PC-3 (cell line): ENCODE measurements at regions of chr6 and their contacts with region 1.

Region 1: GRCh38 chr6:42043787-42044475 is 6.4 kb upstream of the TAF8 start:
- DNase-seq: peak; percentile 92
- ATAC-seq: peak; percentile 65
- H3K4me3 ChIP-seq: no peak overlapping the region
- H3K27ac ChIP-seq: no peak overlapping the region
- H3K4me1 ChIP-seq: peaks cover 27% of the 10 kb centered on the region
- H3K27me3 ChIP-seq: no peaks in the 10 kb centered on the region
- CTCF ChIP-seq: peak; percentile 97

Region 2: DNA sequence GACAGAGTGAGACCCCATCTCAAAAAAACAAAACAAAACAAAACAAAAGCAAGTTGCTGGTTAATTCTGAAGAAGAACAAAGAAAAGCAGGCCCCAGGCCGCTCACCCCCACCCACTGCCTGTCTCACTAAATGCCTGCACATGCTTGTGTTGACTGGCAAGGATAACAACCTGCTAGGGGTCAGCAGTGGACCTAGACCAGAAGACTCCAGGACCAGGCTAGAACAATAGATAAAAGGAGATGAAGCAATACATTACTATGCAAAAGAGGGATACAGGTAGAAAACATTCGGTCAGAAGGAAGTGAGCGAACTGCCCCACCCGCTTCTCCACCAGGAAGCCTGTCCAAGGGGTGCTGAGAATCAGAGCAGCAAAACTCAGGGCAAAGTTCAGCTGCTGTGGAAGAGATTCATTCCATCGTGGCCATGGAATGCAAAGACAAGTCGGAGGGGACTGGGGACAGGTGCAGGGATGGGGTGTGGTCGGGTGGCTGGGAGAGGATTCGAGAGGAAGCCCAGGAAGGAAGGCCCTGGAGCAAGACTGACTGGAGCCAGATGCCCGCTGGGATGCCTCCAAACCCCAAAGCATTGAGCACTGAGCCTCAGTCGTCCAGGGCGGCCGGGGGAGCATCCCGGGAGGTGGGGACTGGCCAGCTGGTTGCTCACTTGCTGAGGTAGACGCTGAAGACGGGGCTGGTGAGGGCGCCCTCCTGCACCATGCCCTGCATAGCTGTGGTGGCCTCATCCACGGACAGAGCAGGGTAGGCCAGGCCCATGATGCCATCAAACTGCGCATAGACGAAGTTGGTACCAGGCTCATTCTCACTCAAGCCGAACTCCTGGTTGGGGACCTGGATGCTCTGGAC is 302.1 kb before region 1 on chr6:
- CTCF ChIA-PET with region 1: no interaction called
- POLR2A ChIA-PET with region 1: no interaction called
- intact Hi-C with region 1: loop called (anchors 2 kb)
- DNase-seq: peak; percentile 66
- ATAC-seq: peak; percentile 67
- H3K4me3 ChIP-seq: no peak overlapping the region
- H3K27ac ChIP-seq: peak overlapping the region; percentile 25
- H3K4me1 ChIP-seq: peaks cover 17% of the 10 kb centered on the region
- H3K27me3 ChIP-seq: no peaks in the 10 kb centered on the region
- CTCF ChIP-seq: no peak

Region 3: GRCh38 chr6:41801380-41801779 is 242.6 kb before region 1 on chr6:
- CTCF ChIA-PET with region 1: interaction called, 3 read pairs
- POLR2A ChIA-PET with region 1: no interaction called
- intact Hi-C with region 1: loop called (anchors 1 kb)
- DNase-seq: peak; percentile 55
- ATAC-seq: peak; percentile 73
- H3K4me3 ChIP-seq: no peak overlapping the region
- H3K27ac ChIP-seq: no peak overlapping the region
- H3K4me1 ChIP-seq: no peaks in the 10 kb centered on the region
- H3K27me3 ChIP-seq: no peaks in the 10 kb centered on the region
- CTCF ChIP-seq: peak; percentile 80

Region 4: DNA sequence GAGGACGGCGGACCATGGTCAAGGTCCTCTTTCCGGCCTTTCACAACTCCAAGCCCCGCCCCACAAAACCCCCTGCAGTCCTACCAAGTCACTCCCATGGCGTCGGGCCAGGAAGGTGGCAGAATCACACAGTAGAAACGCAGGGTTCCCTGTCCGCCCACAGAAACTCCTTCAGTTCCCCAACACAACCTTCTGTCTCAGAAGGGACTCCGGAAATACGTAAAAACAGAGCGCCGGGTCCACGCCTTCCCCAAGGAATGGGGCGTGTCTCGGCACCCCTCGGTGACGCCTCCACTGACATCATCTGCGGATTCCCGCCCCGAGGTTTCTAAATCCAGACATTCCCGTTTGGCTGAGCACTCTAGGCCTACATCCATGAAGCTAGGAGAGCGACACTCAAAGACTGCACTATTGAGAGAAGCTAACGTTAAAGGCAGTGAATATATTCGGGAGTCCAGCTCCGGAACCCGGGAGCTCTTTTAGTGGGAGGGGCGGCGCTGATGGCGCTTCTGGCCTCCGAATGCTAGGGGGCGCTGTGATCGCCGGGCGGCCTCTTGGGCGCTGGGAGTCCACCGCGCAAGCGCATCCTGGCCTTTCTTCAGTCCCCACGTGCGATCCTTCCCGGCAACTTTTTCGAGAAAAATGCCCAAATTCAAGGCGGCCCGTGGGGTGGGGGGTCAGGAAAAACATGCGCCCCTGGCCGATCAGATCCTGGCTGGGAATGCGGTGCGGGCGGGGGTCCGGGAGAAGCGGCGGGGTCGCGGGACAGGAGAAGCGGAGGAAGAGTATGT is 122.8 kb before region 1 on chr6 and contains the starts of genes BYSL and MED20:
- CTCF ChIA-PET with region 1: interaction called, 4 read pairs
- POLR2A ChIA-PET with region 1: no interaction called
- intact Hi-C with region 1: loop called (anchors 5 kb)
- DNase-seq: peak; percentile 94
- ATAC-seq: peak; percentile 80
- H3K4me3 ChIP-seq: peak within 1 kb of the TSS; percentile 99
- H3K27ac ChIP-seq: peak within 1 kb of the TSS; percentile 89
- H3K4me1 ChIP-seq: peaks cover 37% of the 10 kb centered on the region
- H3K27me3 ChIP-seq: no peaks in the 10 kb centered on the region
- CTCF ChIP-seq: peak; percentile 96
- total RNA-seq, gene BYSL: 46.5 and 84.1 TPM in 2 replicates
- total RNA-seq, gene MED20: 27.5 and 28.5 TPM in 2 replicates

Region 5: DNA sequence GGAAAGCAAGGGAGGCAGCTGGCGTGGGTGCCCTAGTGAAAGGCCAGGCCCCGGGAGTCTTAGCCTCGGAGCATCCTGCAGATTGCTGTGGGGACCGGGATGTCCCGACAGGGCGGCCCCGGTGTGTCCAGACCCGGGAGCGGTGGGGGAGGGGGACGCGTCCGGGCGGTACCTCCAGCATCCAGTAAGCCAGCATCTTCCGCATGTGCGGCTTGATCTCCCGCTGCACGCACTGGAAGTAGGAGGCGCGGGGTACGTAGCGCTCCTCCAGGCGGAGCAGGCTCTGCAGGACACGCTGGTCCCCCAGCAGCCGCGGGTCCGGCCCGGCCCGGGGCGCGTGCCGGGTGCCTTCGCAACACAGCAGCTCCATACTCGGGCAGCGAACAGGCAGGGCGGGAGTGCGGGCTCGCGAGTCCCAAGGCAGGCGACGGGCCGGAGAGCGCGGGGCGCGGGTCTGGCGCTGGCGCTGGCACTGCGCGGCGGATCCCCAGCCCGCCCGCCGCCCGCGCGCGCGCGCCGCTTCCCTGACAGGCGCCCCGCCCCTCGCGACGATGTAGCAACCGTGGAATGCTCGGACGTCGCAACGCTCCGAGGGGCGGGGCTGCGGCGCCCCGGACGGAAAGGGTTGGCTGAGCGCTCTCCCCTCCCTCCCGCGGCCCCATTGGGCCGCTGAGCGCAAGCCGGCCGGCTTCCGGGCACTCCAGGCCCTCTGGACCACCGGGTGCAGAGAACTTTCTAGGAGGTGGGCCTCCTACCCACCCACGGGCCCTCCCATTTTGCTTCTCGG is 102.5 kb before region 1 on chr6 and contains the start of gene CCND3:
- CTCF ChIA-PET with region 1: interaction called, 9 read pairs
- POLR2A ChIA-PET with region 1: no interaction called
- intact Hi-C with region 1: loop called (anchors 1 kb)
- DNase-seq: peak; percentile 96
- ATAC-seq: peak; percentile 92
- H3K4me3 ChIP-seq: peak within 1 kb of the TSS; percentile 87
- H3K27ac ChIP-seq: peak within 1 kb of the TSS; percentile 35
- H3K4me1 ChIP-seq: peaks cover 29% of the 10 kb centered on the region
- H3K27me3 ChIP-seq: no peaks in the 10 kb centered on the region
- CTCF ChIP-seq: no peak
- total RNA-seq, gene CCND3: 44.7 and 49.9 TPM in 2 replicates

Region 6: GRCh38 chr6:42166444-42167141 is 122.7 kb after region 1 on chr6:
- CTCF ChIA-PET with region 1: no interaction called
- POLR2A ChIA-PET with region 1: no interaction called
- intact Hi-C with region 1: no loop called
- DNase-seq: peak; percentile 94
- ATAC-seq: peak; percentile 95
- H3K4me3 ChIP-seq: no peak overlapping the region; the same call in 1 of the 2 replicates
- H3K27ac ChIP-seq: no peak overlapping the region
- H3K4me1 ChIP-seq: peaks cover 8% of the 10 kb centered on the region
- H3K27me3 ChIP-seq: no peaks in the 10 kb centered on the region
- CTCF ChIP-seq: peak; percentile 97